Endothelial cell of umbilical vein (primary cell): ENCODE measurements at regions of chr5 and their contacts with region 1.

Region 1: DNA sequence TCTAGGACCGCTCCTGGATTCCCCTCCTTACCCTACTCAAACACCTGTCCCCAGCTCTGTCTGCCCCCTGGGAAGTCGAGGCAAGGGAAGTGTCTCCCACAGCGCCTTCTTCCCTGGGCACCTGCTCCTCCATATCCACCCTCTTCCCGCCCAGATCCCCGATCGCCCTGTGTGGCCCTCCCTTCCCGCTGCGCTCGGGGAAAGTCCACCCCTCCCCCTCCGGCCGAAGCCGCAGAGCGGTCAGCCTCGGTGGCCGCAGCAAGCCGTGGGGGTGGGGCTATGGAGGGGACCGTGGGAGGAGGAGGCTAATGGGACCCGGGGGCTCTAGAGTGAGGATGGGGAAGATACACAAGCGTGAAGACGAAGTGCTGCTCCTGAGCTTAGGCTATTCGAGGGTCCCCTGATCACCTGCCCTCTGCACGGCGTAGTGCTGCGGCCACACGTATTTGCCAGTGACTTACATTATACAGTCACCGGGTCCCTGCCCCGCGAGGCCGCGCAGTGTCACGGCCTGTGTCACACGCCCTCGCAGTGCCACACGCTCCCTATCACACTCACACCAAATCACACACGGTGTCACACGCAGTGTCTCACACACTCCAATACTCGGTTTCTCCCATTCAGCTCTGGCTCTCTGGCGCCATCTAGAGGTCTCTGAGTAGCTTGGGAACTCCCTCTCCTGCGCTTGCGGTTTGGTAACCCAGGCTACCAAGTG is 658 bp upstream of the PCDH1 start:
- DNase-seq: peak; percentile 92
- H3K4me3 ChIP-seq: peak overlapping the region; percentile 37 to 58 (median 52)
- H3K27ac ChIP-seq: no peak overlapping the region
- H3K4me1 ChIP-seq: peaks cover 22% of the 10 kb centered on the region
- H3K27me3 ChIP-seq: peaks cover 26 to 33% of the 10 kb centered on the region in 2 experiments
- CTCF ChIP-seq: peak; percentile 91 to 94
- POLR2A ChIP-seq: no peak

Region 2: GRCh38 chr5:141691867-141692532 is 186.9 kb before region 1 on chr5:
- CTCF ChIA-PET with region 1: interaction called, 233 read pairs
- POLR2A ChIA-PET with region 1: interaction called, 5 read pairs
- dilution Hi-C with region 1: no loop called
- intact Hi-C with region 1: loop called (anchors 1 kb)
- DNase-seq: peak; percentile 87
- H3K4me3 ChIP-seq: peak overlapping the region in 2 of 3 experiments; percentile 24 to 28
- H3K27ac ChIP-seq: no peak overlapping the region
- H3K4me1 ChIP-seq: peaks cover 21% of the 10 kb centered on the region
- H3K27me3 ChIP-seq: no peaks in the 10 kb centered on the region
- CTCF ChIP-seq: peak; percentile 96 to 99
- POLR2A ChIP-seq: no peak

Region 3: DNA sequence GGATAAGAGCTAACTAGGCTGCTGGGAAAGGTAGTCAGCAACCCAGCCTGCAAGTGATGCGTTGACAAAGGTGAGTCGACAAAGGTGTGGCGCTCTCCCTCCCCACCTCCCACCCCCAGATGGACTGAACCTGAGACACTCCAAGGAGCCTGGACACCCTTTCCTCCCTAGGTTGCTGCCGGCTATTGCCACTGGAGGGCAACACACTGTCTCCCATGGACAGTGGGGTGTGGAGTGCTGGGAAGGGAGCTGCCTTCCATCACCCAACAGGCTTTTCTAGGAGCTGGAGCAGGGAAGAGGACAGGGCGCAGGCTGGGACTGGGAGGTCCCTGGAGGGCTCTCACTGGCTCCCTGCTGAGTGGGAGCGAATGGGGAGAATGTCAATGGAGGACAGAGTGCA is 121.5 kb before region 1 on chr5:
- CTCF ChIA-PET with region 1: interaction called, 217 read pairs
- POLR2A ChIA-PET with region 1: interaction called, 5 read pairs
- dilution Hi-C with region 1: no loop called
- intact Hi-C with region 1: loop called (anchors 1 kb)
- DNase-seq: peak; percentile 57
- H3K4me3 ChIP-seq: no peak overlapping the region
- H3K27ac ChIP-seq: no peak overlapping the region
- H3K4me1 ChIP-seq: no peaks in the 10 kb centered on the region
- H3K27me3 ChIP-seq: peaks cover 23 to 36% of the 10 kb centered on the region in 2 experiments
- CTCF ChIP-seq: peak; percentile 54 to 77
- POLR2A ChIP-seq: no peak

Region 4: GRCh38 chr5:141811287-141812155 is 67.3 kb before region 1 on chr5:
- CTCF ChIA-PET with region 1: interaction called, 60 read pairs
- POLR2A ChIA-PET with region 1: no interaction called
- dilution Hi-C with region 1: no loop called
- intact Hi-C with region 1: loop called (anchors 1 kb)
- DNase-seq: no peak
- H3K4me3 ChIP-seq: no peak overlapping the region
- H3K27ac ChIP-seq: no peak overlapping the region
- H3K4me1 ChIP-seq: peaks cover 10% of the 10 kb centered on the region
- H3K27me3 ChIP-seq: peaks cover 0 to 1% of the 10 kb centered on the region in 2 experiments
- CTCF ChIP-seq: peak; percentile 72 to 77
- POLR2A ChIP-seq: no peak

Region 5: GRCh38 chr5:141858084-141858765 is 20.6 kb before region 1 on chr5:
- CTCF ChIA-PET with region 1: interaction called, 15 read pairs
- POLR2A ChIA-PET with region 1: no interaction called
- dilution Hi-C with region 1: no loop called
- intact Hi-C with region 1: no loop called
- DNase-seq: no peak
- H3K4me3 ChIP-seq: no peak overlapping the region
- H3K27ac ChIP-seq: no peak overlapping the region
- H3K4me1 ChIP-seq: no peaks in the 10 kb centered on the region
- H3K27me3 ChIP-seq: no peaks in the 10 kb centered on the region
- CTCF ChIP-seq: no peak
- POLR2A ChIP-seq: no peak

Region 6: DNA sequence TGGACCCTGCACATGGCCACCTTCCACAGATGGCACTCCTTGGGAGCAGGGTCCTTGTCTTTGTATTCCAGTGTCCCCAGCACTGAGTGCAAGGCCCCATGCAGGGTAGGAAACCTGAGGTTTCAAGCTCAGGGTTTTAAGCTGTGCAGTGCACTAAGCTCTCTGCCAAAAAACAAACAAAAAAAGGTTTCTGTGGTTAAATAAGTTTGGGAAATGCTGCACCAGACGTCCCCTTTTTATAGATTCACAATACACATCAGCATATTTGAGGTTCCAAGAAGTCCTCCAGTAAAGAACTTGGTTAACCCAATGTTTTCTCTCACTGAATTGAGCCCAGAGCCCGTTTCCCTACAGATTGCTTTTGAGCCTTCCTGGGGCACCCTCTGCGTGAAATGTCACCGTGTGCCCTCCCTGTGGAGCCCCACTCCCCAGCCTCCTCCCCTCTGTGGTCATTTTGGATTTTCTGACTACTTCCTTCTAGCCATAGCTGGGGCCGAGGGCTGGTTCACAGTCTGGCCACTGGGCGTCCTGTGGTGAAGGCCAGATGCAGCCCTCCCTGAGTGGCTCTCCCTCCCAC is 61.9 kb after region 1 on chr5:
- CTCF ChIA-PET with region 1: interaction called, 12 read pairs
- POLR2A ChIA-PET with region 1: no interaction called
- dilution Hi-C with region 1: no loop called
- intact Hi-C with region 1: no loop called
- DNase-seq: no peak
- H3K4me3 ChIP-seq: no peak overlapping the region
- H3K27ac ChIP-seq: peak overlapping the region; percentile 19
- H3K4me1 ChIP-seq: peaks cover 27% of the 10 kb centered on the region
- H3K27me3 ChIP-seq: no peaks in the 10 kb centered on the region
- CTCF ChIP-seq: peak; percentile 5 to 30
- POLR2A ChIP-seq: no peak